Mammary epithelial cell (primary cell): ENCODE measurements at regions of chr12 and their contacts with region 1.

Region 1: DNA sequence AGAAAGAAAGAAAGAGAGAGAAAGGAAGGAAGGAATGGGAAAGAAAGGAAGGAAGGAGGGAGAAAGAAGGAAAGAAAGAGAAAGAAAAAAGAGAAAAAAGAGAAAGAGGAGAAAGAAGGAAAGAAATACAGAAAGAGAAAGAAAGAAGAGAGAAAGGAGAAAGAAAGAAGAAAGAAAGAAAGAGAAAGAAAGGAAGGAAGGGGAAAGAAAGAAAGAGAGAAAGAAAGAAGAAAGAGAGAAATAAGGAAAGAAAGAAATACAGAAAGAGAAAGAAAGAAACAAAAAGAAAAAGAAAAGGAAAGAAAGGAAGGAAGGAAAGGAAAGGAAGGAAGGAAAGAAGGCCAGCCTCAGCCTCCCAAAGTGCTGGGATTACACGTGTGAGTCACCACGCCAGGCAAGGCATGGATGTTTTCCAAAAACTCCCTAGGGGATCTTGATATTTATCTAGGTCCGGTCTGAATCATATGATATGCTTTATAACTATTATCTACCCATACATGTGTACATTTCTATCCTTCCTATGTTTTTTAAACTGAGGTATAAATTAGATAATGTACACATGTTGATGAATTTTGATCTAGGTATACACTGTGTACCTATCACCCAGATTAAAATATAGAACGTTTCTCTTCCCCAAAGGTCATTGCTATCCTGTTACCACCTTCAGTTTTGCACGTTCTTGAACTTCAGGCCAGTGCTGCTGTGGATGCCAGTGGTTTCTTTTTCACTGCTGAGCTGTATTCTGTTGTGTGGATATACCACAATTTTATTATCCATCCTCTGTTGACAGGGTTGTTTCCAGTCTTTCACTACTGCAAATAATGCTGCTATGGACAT is 177.9 kb downstream of the RBM19 start:
- DNase-seq: no peak
- H3K4me3 ChIP-seq: no peak overlapping the region
- H3K27ac ChIP-seq: no peak overlapping the region
- H3K4me1 ChIP-seq: peaks cover 4% of the 10 kb centered on the region
- H3K27me3 ChIP-seq: no peaks in the 10 kb centered on the region
- CTCF ChIP-seq: no peak

Region 2: DNA sequence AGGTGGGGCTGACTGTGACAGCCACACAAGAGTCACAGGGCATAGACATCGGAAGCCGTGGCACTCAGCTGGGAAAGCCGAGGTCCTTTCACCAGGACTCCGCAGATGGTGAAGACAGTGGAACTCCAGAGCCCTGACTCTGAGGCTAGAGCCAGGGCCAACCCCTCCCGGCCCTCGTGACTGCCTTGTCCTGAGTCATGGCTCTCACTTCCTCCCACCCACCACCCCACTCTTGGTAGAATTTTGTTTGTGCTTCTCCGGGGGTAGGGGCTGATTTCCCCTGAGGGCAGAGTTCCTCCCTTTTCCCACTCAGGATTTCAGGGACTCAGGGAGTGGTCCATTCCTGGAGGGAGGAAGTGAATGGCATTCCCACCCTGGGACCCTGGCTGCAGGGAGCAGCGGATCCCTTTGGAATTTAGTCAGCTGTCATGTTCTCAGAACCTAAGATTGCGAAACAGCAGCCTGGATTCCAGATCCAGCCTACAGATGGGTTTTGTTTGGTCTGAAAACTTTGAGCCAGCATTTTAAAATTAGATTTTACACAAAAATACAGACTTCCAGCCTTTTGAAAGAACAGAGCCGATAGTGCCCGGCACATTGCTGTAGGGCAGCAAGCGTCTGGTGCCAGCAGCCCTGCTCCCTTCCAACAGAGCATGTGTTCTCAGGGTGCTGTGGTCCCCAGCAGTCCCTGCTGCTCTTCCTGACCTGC is 516.2 kb before region 1 on chr12:
- CTCF ChIA-PET with region 1: no interaction called
- dilution Hi-C with region 1: no loop called
- in situ Hi-C with region 1: no loop called
- intact Hi-C with region 1: no loop called
- DNase-seq: peak; percentile 37
- H3K4me3 ChIP-seq: no peak overlapping the region
- H3K27ac ChIP-seq: no peak overlapping the region
- H3K4me1 ChIP-seq: peaks cover 12% of the 10 kb centered on the region
- H3K27me3 ChIP-seq: no peaks in the 10 kb centered on the region
- CTCF ChIP-seq: no peak

Region 3: GRCh38 chr12:113727651-113728061 is 60.6 kb before region 1 on chr12:
- CTCF ChIA-PET with region 1: no interaction called
- dilution Hi-C with region 1: loop called (anchors 5 kb)
- in situ Hi-C with region 1: no loop called
- intact Hi-C with region 1: no loop called
- DNase-seq: peak; percentile 22
- H3K4me3 ChIP-seq: no peak overlapping the region
- H3K27ac ChIP-seq: no peak overlapping the region
- H3K4me1 ChIP-seq: no peaks in the 10 kb centered on the region
- H3K27me3 ChIP-seq: no peaks in the 10 kb centered on the region
- CTCF ChIP-seq: no peak

Region 4: DNA sequence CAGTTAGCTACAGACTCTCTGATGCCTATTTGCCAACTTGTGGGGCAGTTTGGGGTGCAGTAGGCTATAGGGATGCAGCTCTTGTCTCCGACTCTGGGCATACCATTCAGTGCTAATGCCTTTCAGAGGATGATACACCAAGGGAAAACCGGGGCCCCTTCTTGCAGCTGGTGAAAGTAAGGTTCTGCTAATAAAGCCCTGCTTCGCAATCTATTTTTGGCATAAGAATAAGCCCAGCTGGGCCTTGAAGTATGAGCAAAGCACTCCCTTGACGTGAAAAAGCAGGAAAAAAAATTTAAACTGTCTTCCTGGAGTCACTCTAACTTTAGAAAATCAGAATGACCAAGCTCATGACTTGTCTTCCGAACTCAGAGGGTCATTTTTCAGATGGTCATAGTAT is 302.0 kb after region 1 on chr12:
- CTCF ChIA-PET with region 1: no interaction called
- dilution Hi-C with region 1: no loop called
- in situ Hi-C with region 1: no loop called
- intact Hi-C with region 1: no loop called
- DNase-seq: no peak
- H3K4me3 ChIP-seq: no peak overlapping the region
- H3K27ac ChIP-seq: no peak overlapping the region
- H3K4me1 ChIP-seq: no peaks in the 10 kb centered on the region
- H3K27me3 ChIP-seq: no peaks in the 10 kb centered on the region
- CTCF ChIP-seq: no peak